ENCODE measurements at regions of chr11 and their contacts with region 1.

Region 1: DNA sequence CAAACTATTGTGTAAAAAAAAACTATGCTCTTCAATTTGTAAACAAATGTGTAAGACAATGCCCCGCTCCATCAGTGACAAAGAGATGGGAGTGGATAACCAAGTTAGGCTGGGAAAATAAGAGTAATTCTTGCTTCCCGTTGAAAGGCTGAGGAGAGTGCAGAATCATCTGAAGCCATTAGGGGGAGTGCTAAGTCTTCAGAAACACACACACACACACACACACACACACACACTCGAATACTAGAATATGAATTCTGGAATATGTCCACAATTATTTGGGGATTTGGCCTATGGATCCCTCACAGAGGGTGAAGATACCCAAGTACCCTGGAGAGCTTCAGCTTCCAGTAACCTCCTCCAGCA is 27.8 kb upstream of the ROBO3 start:
- DNase-seq: peak; percentile 87
- H3K4me3 ChIP-seq: no peak overlapping the region
- H3K27ac ChIP-seq: no peak overlapping the region
- H3K4me1 ChIP-seq: peaks cover 10% of the 10 kb centered on the region
- H3K27me3 ChIP-seq: peaks cover 37 to 53% of the 10 kb centered on the region in 2 experiments
- CTCF ChIP-seq: peak; percentile 55 to 69
- POLR2A ChIP-seq: no peak

Region 2: DNA sequence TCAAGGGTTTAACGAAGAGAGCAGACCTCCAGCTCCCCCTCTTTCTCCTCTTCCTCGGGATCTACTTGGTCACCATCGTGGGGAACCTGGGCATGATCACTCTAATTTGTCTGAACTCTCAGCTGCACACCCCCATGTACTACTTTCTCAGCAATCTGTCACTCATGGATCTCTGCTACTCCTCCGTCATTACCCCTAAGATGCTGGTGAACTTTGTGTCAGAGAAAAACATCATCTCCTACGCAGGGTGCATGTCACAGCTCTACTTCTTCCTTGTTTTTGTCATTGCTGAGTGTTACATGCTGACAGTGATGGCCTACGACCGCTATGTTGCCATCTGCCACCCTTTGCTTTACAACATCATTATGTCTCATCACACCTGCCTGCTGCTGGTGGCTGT is 267.3 kb before region 1 on chr11:
- CTCF ChIA-PET with region 1: no interaction called
- POLR2A ChIA-PET with region 1: no interaction called
- dilution Hi-C with region 1: no loop called
- intact Hi-C with region 1: no loop called
- DNase-seq: no peak
- H3K4me3 ChIP-seq: no peak overlapping the region
- H3K27ac ChIP-seq: no peak overlapping the region
- H3K4me1 ChIP-seq: no peaks in the 10 kb centered on the region
- H3K27me3 ChIP-seq: peaks cover 0 to 3% of the 10 kb centered on the region in 2 experiments
- CTCF ChIP-seq: no peak
- POLR2A ChIP-seq: no peak

Region 3: DNA sequence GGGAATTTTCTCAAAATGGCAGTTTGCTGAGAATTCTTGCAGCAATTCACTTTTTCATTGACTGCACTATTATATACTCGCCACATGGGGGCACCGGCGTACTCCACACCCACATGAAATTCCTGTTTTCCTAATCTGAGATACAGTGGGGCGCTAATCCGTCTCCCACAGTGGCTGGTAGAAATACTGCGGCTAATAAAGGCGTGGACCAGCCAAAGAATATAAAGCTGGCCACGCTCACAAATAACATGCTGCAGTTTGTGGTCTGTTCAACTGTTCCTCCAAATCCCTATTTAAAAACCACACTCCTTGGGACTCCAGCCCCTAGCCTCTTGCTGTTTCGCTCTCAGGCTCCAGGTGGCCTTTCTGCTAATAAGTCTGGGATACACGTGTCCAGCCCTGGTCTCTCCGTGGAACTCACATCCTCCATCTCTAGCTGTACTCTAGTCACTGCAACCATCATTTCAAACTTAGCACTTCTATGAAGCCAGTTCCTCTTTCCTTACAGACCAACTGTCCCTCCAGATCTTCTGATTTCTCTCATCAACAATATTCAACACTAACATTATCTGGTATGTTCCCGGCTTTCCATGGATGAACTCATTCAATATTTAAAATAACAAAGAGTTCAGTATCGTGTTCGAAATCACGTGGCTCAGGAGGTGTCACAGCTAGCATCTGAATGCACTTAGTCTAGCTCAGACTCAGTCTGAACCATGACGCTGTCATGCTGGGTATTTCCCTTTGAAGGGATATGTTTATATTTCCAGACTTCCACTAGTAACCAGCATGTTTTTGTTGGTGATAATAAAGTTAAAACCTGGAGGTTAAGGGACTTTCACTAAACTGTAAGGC is 192.8 kb before region 1 on chr11:
- CTCF ChIA-PET with region 1: interaction called, 86 read pairs
- POLR2A ChIA-PET with region 1: no interaction called
- dilution Hi-C with region 1: no loop called
- intact Hi-C with region 1: loop called (anchors 1 kb)
- DNase-seq: peak; percentile 87
- H3K4me3 ChIP-seq: peak overlapping the region in 1 of 3 experiments; percentile 32
- H3K27ac ChIP-seq: peak overlapping the region; percentile 22
- H3K4me1 ChIP-seq: peaks cover 18% of the 10 kb centered on the region
- H3K27me3 ChIP-seq: no peaks in the 10 kb centered on the region
- CTCF ChIP-seq: peak; percentile 56 to 79
- POLR2A ChIP-seq: no peak

Region 4: GRCh38 chr11:124739479-124740276 is 97.8 kb before region 1 on chr11 and contains the start of gene NRGN:
- CTCF ChIA-PET with region 1: interaction called, 13 read pairs
- POLR2A ChIA-PET with region 1: no interaction called
- dilution Hi-C with region 1: no loop called
- intact Hi-C with region 1: no loop called
- DNase-seq: peak; percentile 92
- H3K4me3 ChIP-seq: peak within 1 kb of the TSS; percentile 63 to 80 (median 69)
- H3K27ac ChIP-seq: no peak within 1 kb of the TSS
- H3K4me1 ChIP-seq: peaks cover 13% of the 10 kb centered on the region
- H3K27me3 ChIP-seq: peaks cover 3 to 5% of the 10 kb centered on the region in 2 experiments
- CTCF ChIP-seq: no peak
- POLR2A ChIP-seq: peak; percentile 53
- total RNA-seq, gene NRGN: 30.9 and 33.5 TPM in 2 replicates

Region 5: DNA sequence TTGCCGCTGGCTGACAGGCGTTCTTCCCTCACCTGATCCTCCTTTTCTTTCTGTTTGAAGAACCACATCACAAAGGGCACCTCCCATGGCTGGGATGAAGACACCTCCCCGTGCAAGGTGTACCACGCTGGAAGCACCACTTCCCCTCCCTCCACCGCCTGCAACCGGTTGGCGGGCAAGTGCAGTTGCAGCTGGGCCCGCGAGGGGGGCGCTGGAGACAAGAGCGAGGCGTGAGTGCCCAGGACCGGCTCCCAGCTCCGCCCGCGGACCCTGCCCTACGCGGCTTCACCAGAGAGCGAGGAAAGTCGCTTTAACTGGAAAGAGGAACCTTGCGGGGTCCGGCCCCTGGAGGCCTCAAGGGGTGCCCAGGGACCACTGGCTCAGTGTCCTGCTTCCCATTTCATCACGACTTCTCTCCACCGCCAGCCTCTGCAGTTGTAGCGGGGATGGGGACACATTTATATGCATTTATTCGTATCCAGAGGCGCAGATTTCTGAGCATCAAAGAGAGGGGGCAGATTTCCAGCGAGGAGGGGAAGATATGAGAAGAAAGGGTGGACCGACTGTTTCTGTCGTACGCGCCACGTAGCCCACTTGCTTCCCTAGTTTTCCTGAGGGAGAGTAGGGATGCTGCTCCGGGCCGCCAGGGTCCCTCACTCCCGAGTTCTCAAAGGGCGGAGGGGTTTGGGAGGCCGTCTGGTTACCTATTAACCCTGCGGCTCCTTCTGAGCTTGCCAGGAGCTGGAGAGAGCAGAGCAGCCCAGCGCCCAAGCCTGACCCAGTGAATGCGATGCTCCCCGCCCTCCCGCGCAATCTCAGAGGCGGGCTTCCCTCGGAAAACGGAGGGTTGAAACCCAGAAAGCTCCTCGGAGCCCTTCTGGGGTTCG is 78.9 kb before region 1 on chr11:
- CTCF ChIA-PET with region 1: interaction called, 84 read pairs
- POLR2A ChIA-PET with region 1: interaction called, 3 read pairs
- dilution Hi-C with region 1: no loop called
- intact Hi-C with region 1: loop called (anchors 1 kb)
- DNase-seq: peak; percentile 81
- H3K4me3 ChIP-seq: peak overlapping the region; percentile 23 to 65 (median 36)
- H3K27ac ChIP-seq: peak overlapping the region; percentile 97
- H3K4me1 ChIP-seq: peaks cover 65% of the 10 kb centered on the region
- H3K27me3 ChIP-seq: no peaks in the 10 kb centered on the region
- CTCF ChIP-seq: peak; percentile 73 to 91
- POLR2A ChIP-seq: peak; percentile 42

Region 6: GRCh38 chr11:124800226-124800929 is 37.1 kb before region 1 on chr11 and contains the start of gene MSANTD2:
- CTCF ChIA-PET with region 1: interaction called, 191 read pairs
- POLR2A ChIA-PET with region 1: interaction called, 3 read pairs
- dilution Hi-C with region 1: no loop called
- intact Hi-C with region 1: loop called (anchors 1 kb)
- DNase-seq: peak; percentile 82
- H3K4me3 ChIP-seq: peak within 1 kb of the TSS; percentile 59 to 98 (median 62)
- H3K27ac ChIP-seq: peak within 1 kb of the TSS; percentile 81
- H3K4me1 ChIP-seq: peaks cover 20% of the 10 kb centered on the region
- H3K27me3 ChIP-seq: no peaks in the 10 kb centered on the region
- CTCF ChIP-seq: no peak
- POLR2A ChIP-seq: peak; percentile 81
- total RNA-seq, gene MSANTD2: 17.0 and 23.2 TPM in 2 replicates

Region 7: DNA sequence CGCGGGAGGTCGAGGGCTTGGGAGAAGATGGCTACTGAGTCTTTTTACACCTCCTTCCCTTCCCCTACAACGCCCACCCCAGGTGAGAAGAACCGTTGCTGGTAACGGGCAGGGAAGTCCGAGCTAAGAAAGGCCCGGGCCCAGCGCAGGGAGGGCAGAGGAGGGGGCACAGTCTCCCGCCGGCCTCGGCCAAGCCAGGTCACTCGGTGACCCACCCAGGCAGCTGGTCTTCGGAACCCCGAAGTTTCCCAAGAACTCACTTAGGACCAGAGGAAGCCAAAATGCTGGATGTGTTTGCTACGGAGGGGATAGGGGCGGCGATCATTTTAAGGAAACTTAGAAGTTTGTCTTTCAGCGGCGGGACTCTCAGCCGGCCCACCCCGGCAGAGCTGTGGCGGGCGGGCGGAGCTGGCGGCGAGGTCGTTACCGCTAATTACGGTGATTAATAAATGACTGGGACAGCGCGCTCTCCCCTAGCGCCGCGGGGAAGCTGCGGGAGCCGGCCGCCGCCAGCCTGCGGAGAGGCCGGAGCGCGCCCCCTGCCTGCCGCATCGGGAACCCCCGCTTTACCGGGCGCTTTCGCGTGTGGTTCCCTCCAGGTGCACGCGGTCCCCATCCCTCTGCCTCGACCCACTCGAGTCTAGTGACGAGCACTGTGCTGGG is 28.6 kb after region 1 on chr11:
- CTCF ChIA-PET with region 1: interaction called, 86 read pairs
- POLR2A ChIA-PET with region 1: no interaction called
- dilution Hi-C with region 1: no loop called
- intact Hi-C with region 1: loop called (anchors 1 kb)
- DNase-seq: peak; percentile 45
- H3K4me3 ChIP-seq: no peak overlapping the region
- H3K27ac ChIP-seq: no peak overlapping the region
- H3K4me1 ChIP-seq: peaks cover 9% of the 10 kb centered on the region
- H3K27me3 ChIP-seq: peaks cover 89 to 92% of the 10 kb centered on the region in 2 experiments
- CTCF ChIP-seq: peak; percentile 82 to 90
- POLR2A ChIP-seq: no peak

Region 8: GRCh38 chr11:125141686-125142535 is 304.4 kb after region 1 on chr11:
- CTCF ChIA-PET with region 1: no interaction called
- POLR2A ChIA-PET with region 1: no interaction called
- dilution Hi-C with region 1: no loop called
- intact Hi-C with region 1: no loop called
- DNase-seq: peak; percentile 52
- H3K4me3 ChIP-seq: no peak overlapping the region
- H3K27ac ChIP-seq: no peak overlapping the region
- H3K4me1 ChIP-seq: no peaks in the 10 kb centered on the region
- H3K27me3 ChIP-seq: peaks cover 0 to 10% of the 10 kb centered on the region in 2 experiments
- CTCF ChIP-seq: peak; percentile 90 to 95
- POLR2A ChIP-seq: no peak

Region 9: GRCh38 chr11:125154378-125155099 is 317.1 kb after region 1 on chr11:
- CTCF ChIA-PET with region 1: no interaction called
- POLR2A ChIA-PET with region 1: no interaction called
- dilution Hi-C with region 1: no loop called
- intact Hi-C with region 1: no loop called
- DNase-seq: no peak
- H3K4me3 ChIP-seq: no peak overlapping the region
- H3K27ac ChIP-seq: no peak overlapping the region
- H3K4me1 ChIP-seq: no peaks in the 10 kb centered on the region
- H3K27me3 ChIP-seq: peaks cover 0 to 9% of the 10 kb centered on the region in 2 experiments
- CTCF ChIP-seq: no peak
- POLR2A ChIP-seq: no peak